CD8-positive, alpha-beta T cell (primary cell): ENCODE measurements at regions of chr1 and their contacts with region 1.

Region 1: DNA sequence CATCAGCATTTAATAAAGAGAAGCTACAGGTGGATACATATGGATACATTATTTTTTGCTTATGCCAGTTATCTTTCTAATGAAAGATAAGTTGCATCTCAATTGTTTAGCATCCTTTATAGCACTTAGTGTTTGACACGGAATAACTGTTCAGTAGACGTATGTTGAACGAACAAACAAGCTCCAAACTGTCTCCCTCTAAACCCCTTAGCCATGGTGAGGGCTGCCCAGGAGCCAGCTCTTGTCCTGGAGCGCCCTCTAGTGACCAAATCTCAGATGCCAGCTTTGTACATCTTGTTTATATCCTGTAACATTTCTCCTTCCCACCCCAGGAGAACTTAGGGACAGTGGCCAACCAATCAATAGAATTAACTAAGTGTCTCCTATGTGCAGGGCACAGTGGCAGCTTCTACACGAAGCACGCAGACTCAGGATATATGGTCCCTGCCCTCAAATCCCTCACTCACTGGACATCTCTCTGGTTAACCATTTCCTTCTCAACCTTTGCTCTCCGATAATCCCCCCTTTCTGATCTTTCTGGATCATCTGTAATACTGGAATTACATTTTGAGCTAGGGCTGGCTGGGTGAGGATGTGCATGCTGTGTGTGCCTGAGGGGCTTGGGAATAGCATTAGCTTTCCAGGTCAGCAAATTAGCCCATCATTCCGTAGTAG is 22.9 kb downstream of the KCNA10 start:
- DNase-seq: peak; percentile 58 to 82 (median 77)
- ATAC-seq: peak; percentile 80
- H3K4me3 ChIP-seq: no peak overlapping the region
- H3K4me3 Mint-ChIP-seq: no peak overlapping the region
- H3K27ac ChIP-seq: no peak overlapping the region
- H3K27ac Mint-ChIP-seq: no peak overlapping the region
- H3K4me1 ChIP-seq: no peaks in the 10 kb centered on the region
- H3K4me1 Mint-ChIP-seq: no peaks in the 10 kb centered on the region
- H3K27me3 ChIP-seq: no peaks in the 10 kb centered on the region
- H3K27me3 Mint-ChIP-seq: no peaks in the 10 kb centered on the region
- CTCF ChIP-seq: peak; percentile 78

Region 2: GRCh38 chr1:110196917-110197765 is 298.9 kb before region 1 on chr1:
- CTCF ChIA-PET with region 1: interaction called, 57 read pairs
- POLR2A ChIA-PET with region 1: no interaction called
- intact Hi-C with region 1: loop called (anchors 1 kb)
- DNase-seq: peak in 8 of 9 experiments; percentile 15 to 71 (median 55)
- ATAC-seq: peak; percentile 99
- H3K4me3 ChIP-seq: no peak overlapping the region
- H3K4me3 Mint-ChIP-seq: no peak overlapping the region
- H3K27ac ChIP-seq: no peak overlapping the region
- H3K27ac Mint-ChIP-seq: no peak overlapping the region
- H3K4me1 ChIP-seq: no peaks in the 10 kb centered on the region
- H3K4me1 Mint-ChIP-seq: no peaks in the 10 kb centered on the region
- H3K27me3 ChIP-seq: no peaks in the 10 kb centered on the region
- H3K27me3 Mint-ChIP-seq: no peaks in the 10 kb centered on the region
- CTCF ChIP-seq: peak; percentile 94

Region 3: GRCh38 chr1:110370827-110371226 is 125.2 kb before region 1 on chr1:
- CTCF ChIA-PET with region 1: no interaction called
- POLR2A ChIA-PET with region 1: no interaction called
- intact Hi-C with region 1: no loop called
- DNase-seq: no peak
- ATAC-seq: no peak
- H3K4me3 ChIP-seq: no peak overlapping the region
- H3K4me3 Mint-ChIP-seq: no peak overlapping the region
- H3K27ac ChIP-seq: no peak overlapping the region
- H3K27ac Mint-ChIP-seq: no peak overlapping the region
- H3K4me1 ChIP-seq: no peaks in the 10 kb centered on the region
- H3K4me1 Mint-ChIP-seq: peaks cover 7% of the 10 kb centered on the region
- H3K27me3 ChIP-seq: no peaks in the 10 kb centered on the region
- H3K27me3 Mint-ChIP-seq: no peaks in the 10 kb centered on the region
- CTCF ChIP-seq: no peak

Region 4: DNA sequence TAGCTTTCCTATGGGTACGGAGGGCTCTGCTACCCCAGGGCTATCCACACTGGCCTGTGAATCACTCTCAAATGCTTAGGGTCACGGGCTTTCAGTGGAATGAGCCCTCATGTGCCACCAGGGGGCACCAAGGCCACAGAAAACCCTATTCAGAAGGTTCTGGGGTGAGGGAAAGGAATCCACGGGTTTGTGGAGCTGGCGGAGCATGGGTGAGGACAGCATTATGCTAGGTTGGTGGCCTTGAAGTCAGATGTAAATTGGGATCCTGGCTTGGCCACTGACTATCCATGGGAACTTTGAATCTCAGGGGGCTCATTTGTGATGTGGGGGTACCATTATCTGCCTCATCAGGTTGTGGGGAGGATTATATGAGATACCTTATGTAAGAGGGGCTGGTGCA is 83.5 kb before region 1 on chr1:
- CTCF ChIA-PET with region 1: interaction called, 20 read pairs
- POLR2A ChIA-PET with region 1: interaction called, 3 read pairs
- intact Hi-C with region 1: loop called in 1 of 2 experiments (anchors 1 kb)
- DNase-seq: peak; percentile 25 to 72 (median 60)
- ATAC-seq: peak; percentile 41
- H3K4me3 ChIP-seq: no peak overlapping the region
- H3K4me3 Mint-ChIP-seq: no peak overlapping the region
- H3K27ac ChIP-seq: no peak overlapping the region
- H3K27ac Mint-ChIP-seq: no peak overlapping the region
- H3K4me1 ChIP-seq: peaks cover 6% of the 10 kb centered on the region
- H3K4me1 Mint-ChIP-seq: peaks cover 18% of the 10 kb centered on the region
- H3K27me3 ChIP-seq: no peaks in the 10 kb centered on the region
- H3K27me3 Mint-ChIP-seq: no peaks in the 10 kb centered on the region
- CTCF ChIP-seq: peak; percentile 64

Region 5: GRCh38 chr1:110508038-110508940 is 12.2 kb after region 1 on chr1:
- CTCF ChIA-PET with region 1: interaction called, 25 read pairs
- POLR2A ChIA-PET with region 1: no interaction called
- intact Hi-C with region 1: no loop called
- DNase-seq: no peak
- ATAC-seq: no peak
- H3K4me3 ChIP-seq: no peak overlapping the region
- H3K4me3 Mint-ChIP-seq: no peak overlapping the region
- H3K27ac ChIP-seq: no peak overlapping the region
- H3K27ac Mint-ChIP-seq: no peak overlapping the region
- H3K4me1 ChIP-seq: no peaks in the 10 kb centered on the region
- H3K4me1 Mint-ChIP-seq: no peaks in the 10 kb centered on the region
- H3K27me3 ChIP-seq: no peaks in the 10 kb centered on the region
- H3K27me3 Mint-ChIP-seq: peaks cover 9% of the 10 kb centered on the region
- CTCF ChIP-seq: no peak

Region 6: GRCh38 chr1:110524311-110525251 is 28.5 kb after region 1 on chr1:
- CTCF ChIA-PET with region 1: interaction called, 16 read pairs
- POLR2A ChIA-PET with region 1: no interaction called
- intact Hi-C with region 1: no loop called
- DNase-seq: peak; percentile 8 to 69 (median 44)
- ATAC-seq: peak; percentile 77
- H3K4me3 ChIP-seq: no peak overlapping the region
- H3K4me3 Mint-ChIP-seq: peak overlapping the region; percentile 22
- H3K27ac ChIP-seq: no peak overlapping the region
- H3K27ac Mint-ChIP-seq: no peak overlapping the region
- H3K4me1 ChIP-seq: peaks cover 6% of the 10 kb centered on the region
- H3K4me1 Mint-ChIP-seq: peaks cover 3% of the 10 kb centered on the region
- H3K27me3 ChIP-seq: no peaks in the 10 kb centered on the region
- H3K27me3 Mint-ChIP-seq: peaks cover 26% of the 10 kb centered on the region
- CTCF ChIP-seq: peak; percentile 64